HCT116 (cell line): ENCODE measurements at regions of chr7 and their contacts with region 1.

Region 1: DNA sequence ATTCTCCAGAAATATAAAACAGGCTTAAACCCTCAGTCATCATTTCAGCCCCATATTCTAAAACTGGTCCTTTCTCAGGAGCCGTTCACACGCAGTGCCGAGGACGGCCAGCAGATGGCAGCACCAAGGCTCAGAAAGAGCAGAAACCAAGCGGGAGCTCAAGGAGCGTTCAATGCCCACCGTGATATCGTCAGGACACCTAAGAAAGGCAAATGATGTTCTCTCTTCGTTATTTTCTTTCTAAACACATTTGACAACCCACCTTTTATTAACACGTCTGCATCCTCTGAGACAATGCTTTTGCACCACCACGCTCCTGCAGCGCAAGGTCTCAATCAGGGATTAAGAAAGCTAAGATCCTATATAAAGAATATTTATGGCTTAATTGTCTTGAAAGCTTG is 45.7 kb upstream of the RBM33 start:
- DNase-seq: peak; percentile 48
- ATAC-seq: peak; percentile 93
- H3K4me3 ChIP-seq: peak overlapping the region in 1 of 2 experiments; percentile 13; a peak in 1 of 4 replicates
- H3K27ac ChIP-seq: no peak overlapping the region
- H3K4me1 ChIP-seq: peaks cover 0 to 5% of the 10 kb centered on the region in 2 experiments; a peak in 1 of 4 replicates
- H3K27me3 ChIP-seq: peaks cover 25% of the 10 kb centered on the region; the same call in 1 of the 2 replicates
- CTCF ChIP-seq: peak; percentile 75 to 99 (median 99)
- POLR2A ChIP-seq: no peak
- RAD21 ChIP-seq: peak; percentile 79

Region 2: GRCh38 chr7:155477476-155477875 is 121.3 kb before region 1 on chr7:
- CTCF ChIA-PET with region 1: no interaction called
- POLR2A ChIA-PET with region 1: no interaction called
- RAD21 ChIA-PET with region 1: no interaction called
- intact Hi-C with region 1: no loop called
- DNase-seq: no peak
- ATAC-seq: no peak
- H3K4me3 ChIP-seq: no peak overlapping the region
- H3K27ac ChIP-seq: no peak overlapping the region
- H3K4me1 ChIP-seq: no peaks in the 10 kb centered on the region
- H3K27me3 ChIP-seq: 0 out of 2 replicates have a peak, but pooled peaks cover 6% of the 10 kb centered on the region
- CTCF ChIP-seq: no peak
- POLR2A ChIP-seq: no peak
- RAD21 ChIP-seq: no peak

Region 3: DNA sequence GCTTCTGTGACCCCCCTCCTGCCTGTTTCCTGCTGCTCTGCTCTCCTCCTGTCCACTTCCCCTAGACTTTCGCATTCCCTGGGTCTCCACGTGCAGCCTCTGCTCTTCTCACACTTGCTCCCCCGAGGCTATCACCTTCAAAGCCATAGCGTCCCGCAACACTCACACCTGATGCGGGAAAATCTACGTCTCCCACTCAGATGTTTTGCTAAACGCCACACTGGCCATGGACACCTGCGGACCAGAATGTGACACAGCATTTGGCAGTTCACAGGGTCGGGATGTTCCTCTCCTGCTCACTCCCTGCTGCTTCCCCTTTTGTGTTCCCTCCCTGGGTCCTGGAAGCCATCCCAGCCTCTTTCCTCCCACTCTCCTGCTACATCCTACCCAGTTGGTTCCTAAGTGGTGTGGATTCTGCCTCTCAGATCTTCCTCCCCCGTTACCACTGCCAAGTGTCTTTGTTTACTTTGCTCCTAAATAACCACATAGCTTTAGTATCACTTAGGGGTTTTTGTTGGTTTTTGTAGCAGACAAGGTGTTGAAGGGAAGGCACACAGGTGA is 11.9 kb after region 1 on chr7:
- CTCF ChIA-PET with region 1: interaction called, 23 read pairs
- POLR2A ChIA-PET with region 1: no interaction called
- RAD21 ChIA-PET with region 1: no interaction called
- intact Hi-C with region 1: no loop called
- DNase-seq: no peak
- ATAC-seq: no peak
- H3K4me3 ChIP-seq: no peak overlapping the region
- H3K27ac ChIP-seq: no peak overlapping the region
- H3K4me1 ChIP-seq: no peaks in the 10 kb centered on the region
- H3K27me3 ChIP-seq: no peaks in the 10 kb centered on the region
- CTCF ChIP-seq: no peak
- POLR2A ChIP-seq: no peak
- RAD21 ChIP-seq: no peak

Region 4: GRCh38 chr7:155738652-155739537 is 140.1 kb after region 1 on chr7:
- CTCF ChIA-PET with region 1: interaction called, 7 read pairs
- POLR2A ChIA-PET with region 1: no interaction called
- RAD21 ChIA-PET with region 1: no interaction called
- intact Hi-C with region 1: loop called (anchors 1 kb)
- DNase-seq: peak; percentile 16
- ATAC-seq: peak; percentile 63; the same call in 1 of the 2 replicates
- H3K4me3 ChIP-seq: no peak overlapping the region
- H3K27ac ChIP-seq: no peak overlapping the region
- H3K4me1 ChIP-seq: no peaks in the 10 kb centered on the region
- H3K27me3 ChIP-seq: no peaks in the 10 kb centered on the region
- CTCF ChIP-seq: peak in 2 of 3 experiments; percentile 34 to 56; a peak in 2 of 6 replicates
- POLR2A ChIP-seq: no peak
- RAD21 ChIP-seq: peak; percentile 53

Region 5: DNA sequence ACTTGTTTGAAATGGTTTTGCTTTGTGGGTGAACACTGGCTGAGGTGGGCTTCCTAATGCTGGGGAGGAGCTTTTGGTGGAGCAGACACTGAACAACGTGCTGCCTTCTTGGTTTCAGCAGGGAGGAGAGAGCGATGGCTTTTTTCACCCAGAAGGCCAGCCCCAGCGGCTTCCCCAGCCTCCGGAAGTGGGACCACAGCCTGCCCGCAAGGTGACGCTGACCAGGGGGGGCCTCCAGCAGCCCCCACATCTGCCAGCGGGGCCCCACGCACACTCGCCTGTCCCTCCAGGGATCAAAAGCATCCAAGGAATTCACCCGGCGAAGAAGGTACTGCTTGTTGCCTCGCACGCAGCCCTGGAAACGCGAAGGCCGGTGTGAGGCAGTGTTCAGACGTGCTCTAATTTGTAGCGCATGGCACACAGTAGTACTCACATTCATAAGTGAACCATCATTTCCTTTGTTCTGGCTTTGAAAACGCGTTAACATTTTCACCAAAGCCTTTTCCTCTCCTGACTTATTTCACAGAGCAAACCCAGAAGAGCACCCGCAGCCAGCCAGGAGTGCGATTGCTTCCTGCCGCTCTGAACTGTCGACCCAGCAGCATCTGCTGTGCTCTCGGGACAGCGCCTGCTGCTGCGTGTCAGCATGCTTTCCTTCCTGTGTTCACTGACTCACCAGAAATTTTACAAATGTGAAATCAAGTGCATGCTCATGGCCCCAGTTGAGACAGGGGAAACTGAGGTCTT is 165.1 kb after region 1 on chr7:
- CTCF ChIA-PET with region 1: interaction called, 55 read pairs
- POLR2A ChIA-PET with region 1: no interaction called
- RAD21 ChIA-PET with region 1: interaction called, 5 to 13 read pairs
- intact Hi-C with region 1: loop called (anchors 1 kb)
- DNase-seq: no peak
- ATAC-seq: no peak
- H3K4me3 ChIP-seq: no peak overlapping the region
- H3K27ac ChIP-seq: no peak overlapping the region
- H3K4me1 ChIP-seq: no peaks in the 10 kb centered on the region
- H3K27me3 ChIP-seq: no peaks in the 10 kb centered on the region
- CTCF ChIP-seq: no peak
- POLR2A ChIP-seq: no peak
- RAD21 ChIP-seq: no peak

Region 6: DNA sequence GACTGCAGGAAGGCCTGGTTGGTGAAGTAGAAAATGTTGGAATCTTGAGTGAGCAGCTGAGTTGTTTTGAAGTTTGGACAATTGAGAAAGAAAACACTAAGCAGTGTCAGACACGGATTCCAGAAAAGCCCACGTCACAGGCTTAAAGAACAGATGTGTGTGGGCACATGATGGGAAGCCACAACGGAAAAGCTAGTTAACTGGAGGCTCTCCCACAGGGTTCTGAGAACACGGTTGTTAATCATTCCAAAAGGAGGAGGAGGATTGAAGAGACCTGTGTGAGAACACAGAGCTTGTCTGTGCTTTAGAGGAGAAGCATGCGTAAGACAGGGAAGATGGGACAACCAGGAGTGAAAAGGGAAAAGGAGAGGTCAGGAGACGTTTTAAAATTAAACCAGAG is 170.9 kb after region 1 on chr7:
- CTCF ChIA-PET with region 1: interaction called, 55 read pairs
- POLR2A ChIA-PET with region 1: no interaction called
- RAD21 ChIA-PET with region 1: interaction called, 5 to 13 read pairs
- intact Hi-C with region 1: loop called (anchors 1 kb)
- DNase-seq: no peak
- ATAC-seq: no peak
- H3K4me3 ChIP-seq: no peak overlapping the region
- H3K27ac ChIP-seq: no peak overlapping the region
- H3K4me1 ChIP-seq: no peaks in the 10 kb centered on the region
- H3K27me3 ChIP-seq: no peaks in the 10 kb centered on the region
- CTCF ChIP-seq: no peak
- POLR2A ChIP-seq: no peak
- RAD21 ChIP-seq: no peak